ENCODE measurements at regions of chr5 and their contacts with region 1.

Region 1: DNA sequence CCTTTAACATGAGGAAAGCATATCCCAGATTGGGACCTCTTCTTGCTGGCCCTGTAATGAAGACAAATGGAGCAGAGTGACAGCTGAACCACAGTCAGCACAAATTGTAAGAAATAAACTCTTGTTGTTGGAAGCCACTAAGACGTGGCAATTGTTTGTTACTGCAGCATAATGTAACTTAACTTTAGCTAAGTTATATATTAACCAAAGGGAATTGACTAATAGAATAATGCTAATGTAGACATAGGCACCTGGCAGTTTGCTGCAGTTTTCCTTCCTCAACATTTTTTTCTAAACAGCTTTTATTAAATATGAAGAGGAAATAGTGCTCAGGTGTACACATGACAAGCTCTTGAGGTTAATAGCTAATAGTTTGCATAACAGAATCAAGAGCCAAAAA is 300.7 kb upstream of the SLC30A5 start:
- DNase-seq: no peak
- ATAC-seq: no peak
- H3K4me3 ChIP-seq: no peak overlapping the region
- H3K27ac ChIP-seq: no peak overlapping the region
- H3K4me1 ChIP-seq: no peaks in the 10 kb centered on the region
- H3K27me3 ChIP-seq: no peaks in the 10 kb centered on the region

Region 2: DNA sequence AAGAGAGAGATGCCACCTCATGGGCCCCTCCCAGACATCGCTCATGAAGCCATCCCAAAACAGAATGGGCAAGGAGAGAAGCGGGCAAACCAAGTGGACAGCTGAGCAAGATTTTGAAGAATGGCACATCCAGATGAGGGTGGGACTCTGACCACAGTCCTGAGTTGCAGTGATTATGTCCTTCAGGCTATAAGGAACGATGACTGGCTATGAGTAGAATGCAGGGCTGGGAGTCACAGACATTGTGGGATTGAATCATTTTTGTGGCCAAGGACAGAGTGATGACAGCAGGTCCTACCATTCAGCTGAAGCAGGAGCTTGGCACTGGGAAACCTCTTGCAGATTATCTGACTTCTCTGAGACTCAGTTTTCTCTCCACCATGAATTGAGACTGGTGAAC is 55.0 kb after region 1 on chr5:
- intact Hi-C with region 1: loop called in 1 of 2 experiments (anchors 2 kb)
- DNase-seq: no peak
- ATAC-seq: no peak
- H3K4me3 ChIP-seq: no peak overlapping the region
- H3K27ac ChIP-seq: no peak overlapping the region
- H3K4me1 ChIP-seq: no peaks in the 10 kb centered on the region
- H3K27me3 ChIP-seq: no peaks in the 10 kb centered on the region

Region 3: DNA sequence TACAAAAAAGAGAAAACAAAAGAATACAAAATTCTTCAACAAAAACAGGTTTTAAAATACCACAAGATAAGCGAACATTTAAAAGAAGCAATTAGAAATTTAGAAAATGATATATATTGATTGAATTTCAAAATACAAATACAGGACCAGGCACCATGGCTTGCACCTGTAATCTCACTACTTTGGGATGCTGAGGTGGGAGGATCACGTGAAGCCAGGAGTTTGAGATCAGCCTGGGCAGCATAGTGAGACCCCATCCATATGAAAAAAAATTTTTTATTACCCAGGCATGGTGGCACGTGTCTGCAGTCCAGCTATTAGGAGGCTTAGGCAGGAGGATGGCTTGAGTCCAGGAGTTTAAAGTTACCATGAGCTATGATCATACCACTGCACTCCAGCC is 190.9 kb after region 1 on chr5:
- intact Hi-C with region 1: no loop called
- DNase-seq: no peak
- ATAC-seq: no peak
- H3K4me3 ChIP-seq: no peak overlapping the region
- H3K27ac ChIP-seq: no peak overlapping the region
- H3K4me1 ChIP-seq: no peaks in the 10 kb centered on the region
- H3K27me3 ChIP-seq: no peaks in the 10 kb centered on the region